ENCODE measurements at regions of chr3 and their contacts with region 1.

Region 1: DNA sequence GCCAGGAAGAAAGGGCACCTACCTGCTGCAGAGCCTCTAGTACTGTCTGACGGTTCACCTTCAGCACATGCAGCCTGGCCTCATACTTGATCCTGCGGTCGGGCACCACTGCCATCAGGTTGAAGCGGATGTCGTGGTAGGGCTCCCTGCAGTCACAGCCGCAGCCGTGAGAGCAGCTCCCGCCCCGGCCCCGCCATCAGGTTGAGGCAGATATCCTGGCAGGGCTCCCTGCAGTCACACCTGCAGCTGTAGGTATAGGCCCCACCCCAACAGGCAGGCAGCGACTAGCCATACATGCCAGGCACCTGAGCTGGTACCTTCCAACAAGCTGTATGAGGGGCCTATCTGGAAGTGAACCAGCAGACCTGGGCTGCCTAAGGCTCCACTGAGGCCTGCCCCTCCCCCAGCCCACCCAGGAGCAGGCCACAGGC is 38.7 kb downstream of the SEMA3G start:
- DNase-seq: peak in 3 of 5 donors; percentile 20 to 55 (median 21)
- ATAC-seq: no peak
- H3K4me3 ChIP-seq: no peak overlapping the region
- H3K27ac ChIP-seq: no peak overlapping the region
- H3K4me1 ChIP-seq: peaks cover 0 to 29% (median 19%) of the 10 kb centered on the region in 12 donors
- H3K27me3 ChIP-seq: no peaks in the 10 kb centered on the region
- CTCF ChIP-seq: no peak
- POLR2A ChIP-seq: no peak

Region 2: GRCh38 chr3:51477360-51477711 is 928.9 kb before region 1 on chr3:
- intact Hi-C with region 1: loop called in 1 of 10 experiments (anchors 10 kb)
- DNase-seq: no peak
- ATAC-seq: no peak
- H3K4me3 ChIP-seq: no peak overlapping the region
- H3K27ac ChIP-seq: no peak overlapping the region
- H3K4me1 ChIP-seq: no peaks in the 10 kb centered on the region
- H3K27me3 ChIP-seq: no peaks in the 10 kb centered on the region
- CTCF ChIP-seq: no peak
- POLR2A ChIP-seq: no peak

Region 3: GRCh38 chr3:52238761-52239701 is 167.2 kb before region 1 on chr3 and contains the start of gene TWF2:
- intact Hi-C with region 1: loop called in 1 of 10 experiments (anchors 10 kb)
- DNase-seq: peak; percentile 85 to 92 (median 88)
- ATAC-seq: peak; percentile 33 to 86 (median 77)
- H3K4me3 ChIP-seq: peak within 1 kb of the TSS; percentile 79 to 99 (median 96)
- H3K27ac ChIP-seq: peak within 1 kb of the TSS; percentile 66 to 97 (median 91)
- H3K4me1 ChIP-seq: peaks cover 10 to 75% (median 45%) of the 10 kb centered on the region in 12 donors
- H3K27me3 ChIP-seq: no peaks in the 10 kb centered on the region
- CTCF ChIP-seq: peak; percentile 24 to 66 (median 41)
- POLR2A ChIP-seq: peak in 1 of 2 donors; percentile 88
- total RNA-seq, gene TWF2: 62.9 to 133 (median 117) TPM

Region 4: DNA sequence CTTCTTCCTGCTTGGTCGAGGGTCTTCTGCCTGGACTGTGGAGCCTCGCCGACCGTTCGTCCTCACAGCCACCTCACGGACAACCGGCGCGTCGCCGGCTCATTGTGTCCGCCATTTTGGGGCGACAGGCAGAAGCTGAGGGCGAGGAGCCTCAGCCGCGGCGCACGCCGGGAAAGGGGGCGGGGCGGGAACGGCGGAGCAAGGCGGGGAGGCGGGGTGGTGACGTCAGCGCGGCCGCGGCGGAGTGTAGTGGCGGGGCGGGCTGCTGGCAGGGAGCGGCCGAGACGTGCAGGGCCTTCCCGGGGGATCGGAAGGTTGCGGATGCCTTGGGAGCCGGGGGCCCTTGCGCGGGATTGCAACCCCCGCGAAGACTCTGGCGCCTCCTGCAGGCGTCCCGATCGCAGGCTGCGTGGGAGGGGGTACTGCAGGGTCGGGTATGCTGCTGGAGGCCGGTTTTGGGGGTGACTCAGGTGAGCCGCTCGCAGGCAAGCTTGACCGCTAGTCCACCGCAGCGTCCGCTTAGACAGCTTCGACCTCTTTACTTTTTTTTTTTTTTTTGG is 127.7 kb before region 1 on chr3 and contains the start of gene WDR82:
- intact Hi-C with region 1: loop called in 1 of 10 experiments (anchors 10 kb)
- DNase-seq: peak; percentile 98 to 99 (median 99)
- ATAC-seq: peak; percentile 89 to 97 (median 96)
- H3K4me3 ChIP-seq: peak within 1 kb of the TSS; percentile 73 to 99 (median 82)
- H3K27ac ChIP-seq: peak within 1 kb of the TSS; percentile 94 to 99 (median 98)
- H3K4me1 ChIP-seq: peaks cover 0 to 80% (median 54%) of the 10 kb centered on the region in 12 donors
- H3K27me3 ChIP-seq: no peaks in the 10 kb centered on the region
- CTCF ChIP-seq: peak; percentile 39 to 69 (median 56)
- POLR2A ChIP-seq: peak in 1 of 2 donors; percentile 68
- total RNA-seq, gene WDR82: 44.9 to 73.6 (median 61.2) TPM

Region 5: DNA sequence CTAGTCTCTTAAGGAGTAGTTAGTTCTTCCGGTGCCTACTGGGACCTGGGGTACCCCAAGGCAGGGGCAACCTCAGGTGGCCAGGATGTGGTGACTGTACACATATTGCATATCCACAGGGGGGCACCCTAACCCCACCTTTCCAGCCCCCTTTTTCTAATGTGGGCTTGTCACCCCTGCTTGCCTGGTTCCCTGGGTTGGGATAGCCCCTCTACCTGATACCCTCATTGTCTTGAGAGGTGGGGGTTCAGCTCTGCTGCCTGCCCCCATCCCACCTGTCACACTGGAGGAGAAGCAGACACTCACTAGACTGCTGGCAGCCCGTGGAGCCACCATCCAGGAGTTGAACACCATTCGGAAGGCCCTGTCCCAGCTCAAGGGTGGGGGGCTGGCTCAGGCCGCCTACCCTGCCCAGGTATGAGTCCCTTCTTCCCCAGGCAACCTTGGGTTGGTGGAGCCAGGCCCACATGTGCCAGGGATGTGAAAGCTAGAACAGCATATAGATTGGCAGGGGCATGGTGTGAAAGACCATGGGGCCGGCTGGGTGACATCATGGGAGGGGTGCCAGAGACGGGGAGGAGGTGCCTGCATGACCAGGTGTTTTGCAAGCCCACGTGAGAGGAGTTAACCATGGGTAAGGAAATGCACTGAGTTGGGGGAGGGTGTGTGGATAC is 114.6 kb before region 1 on chr3:
- intact Hi-C with region 1: loop called in 2 of 10 experiments (anchors 5 to 10 kb)
- DNase-seq: no peak
- ATAC-seq: no peak
- H3K4me3 ChIP-seq: no peak overlapping the region
- H3K27ac ChIP-seq: no peak overlapping the region
- H3K4me1 ChIP-seq: peaks cover 0 to 20% (median 11%) of the 10 kb centered on the region in 12 donors
- H3K27me3 ChIP-seq: no peaks in the 10 kb centered on the region
- CTCF ChIP-seq: peak; percentile 38 to 60 (median 52)
- POLR2A ChIP-seq: no peak

Region 6: GRCh38 chr3:52357151-52358080 is 48.8 kb before region 1 on chr3:
- intact Hi-C with region 1: no loop called
- DNase-seq: peak in 3 of 5 donors; percentile 9 to 54 (median 19)
- ATAC-seq: no peak
- H3K4me3 ChIP-seq: no peak overlapping the region
- H3K27ac ChIP-seq: no peak overlapping the region
- H3K4me1 ChIP-seq: no peaks in the 10 kb centered on the region
- H3K27me3 ChIP-seq: no peaks in the 10 kb centered on the region
- CTCF ChIP-seq: no peak
- POLR2A ChIP-seq: no peak

Region 7: DNA sequence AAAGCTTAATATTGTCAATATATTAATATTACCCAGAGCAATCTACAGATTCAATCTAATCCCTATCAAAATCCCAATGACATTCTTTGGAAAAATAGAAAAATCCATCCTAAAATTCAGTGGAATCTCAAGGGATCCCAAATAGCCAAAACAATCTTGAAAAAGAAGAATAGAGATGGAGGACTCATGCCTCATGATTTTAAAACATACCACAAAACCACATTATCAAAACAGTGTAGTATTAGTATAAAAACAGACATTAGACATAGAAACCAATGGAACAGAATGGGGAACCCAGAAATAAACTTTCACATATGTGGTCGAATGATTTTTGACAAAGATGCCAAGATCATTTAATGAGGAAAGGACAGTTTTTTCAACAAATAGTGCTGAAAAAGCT is 349.9 kb after region 1 on chr3:
- intact Hi-C with region 1: loop called in 1 of 10 experiments (anchors 5 kb)
- DNase-seq: no peak
- ATAC-seq: no peak
- H3K4me3 ChIP-seq: no peak overlapping the region
- H3K27ac ChIP-seq: no peak overlapping the region
- H3K4me1 ChIP-seq: peaks cover 0 to 4% (median 0%) of the 10 kb centered on the region in 12 donors
- H3K27me3 ChIP-seq: no peaks in the 10 kb centered on the region
- CTCF ChIP-seq: no peak
- POLR2A ChIP-seq: no peak

Region 8: DNA sequence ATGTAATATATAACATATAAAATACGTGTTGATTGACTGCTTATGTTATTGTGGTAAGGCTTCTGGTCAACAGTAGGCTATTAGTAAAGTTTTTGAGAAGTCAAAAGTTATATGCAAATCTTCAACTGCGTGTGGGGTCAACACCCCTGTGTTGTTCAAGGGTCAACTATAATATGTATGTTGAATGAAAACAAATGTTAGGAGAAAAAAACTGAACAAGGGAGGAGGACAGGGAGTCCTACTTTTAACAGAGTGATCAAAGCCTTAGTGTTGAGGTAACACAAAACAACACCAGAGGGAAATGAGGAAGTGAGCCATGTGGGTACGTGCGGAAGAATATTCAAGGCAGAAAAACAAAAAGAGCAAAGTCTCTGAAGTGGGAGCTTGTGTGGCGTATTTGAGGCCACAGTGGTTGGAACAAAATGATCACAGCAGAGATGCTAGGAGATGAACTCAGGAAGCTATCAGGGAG is 577.1 kb after region 1 on chr3:
- intact Hi-C with region 1: no loop called
- DNase-seq: no peak
- ATAC-seq: peak in 2 of 4 donors; percentile 25 to 37
- H3K4me3 ChIP-seq: no peak overlapping the region
- H3K27ac ChIP-seq: peak overlapping the region in 1 of 12 donors; percentile 58
- H3K4me1 ChIP-seq: peaks cover 0 to 13% (median 0%) of the 10 kb centered on the region in 12 donors
- H3K27me3 ChIP-seq: no peaks in the 10 kb centered on the region
- CTCF ChIP-seq: no peak
- POLR2A ChIP-seq: no peak

Measured in heart left ventricle (tissue), 16 donors.